ENCODE measurements at regions of chr16 and their contacts with region 1.

Region 1: GRCh38 chr16:56931892-56932720 is at the start of gene HERPUD1:
- DNase-seq: peak; percentile 100
- H3K4me3 ChIP-seq: peak within 1 kb of the TSS; percentile 72 to 96 (median 82)
- H3K27ac ChIP-seq: peak within 1 kb of the TSS; percentile 96 to 100 (median 99)
- H3K4me1 ChIP-seq: peaks cover 28 to 67% (median 54%) of the 10 kb centered on the region in 6 donors
- H3K27me3 ChIP-seq: no peaks in the 10 kb centered on the region
- CTCF ChIP-seq: peak in 9 of 11 experiments; percentile 6 to 57 (median 33)
- POLR2A ChIP-seq: peak; percentile 71 to 86 (median 74)
- total RNA-seq, gene HERPUD1: 162 to 370 (median 205) TPM

Region 2: DNA sequence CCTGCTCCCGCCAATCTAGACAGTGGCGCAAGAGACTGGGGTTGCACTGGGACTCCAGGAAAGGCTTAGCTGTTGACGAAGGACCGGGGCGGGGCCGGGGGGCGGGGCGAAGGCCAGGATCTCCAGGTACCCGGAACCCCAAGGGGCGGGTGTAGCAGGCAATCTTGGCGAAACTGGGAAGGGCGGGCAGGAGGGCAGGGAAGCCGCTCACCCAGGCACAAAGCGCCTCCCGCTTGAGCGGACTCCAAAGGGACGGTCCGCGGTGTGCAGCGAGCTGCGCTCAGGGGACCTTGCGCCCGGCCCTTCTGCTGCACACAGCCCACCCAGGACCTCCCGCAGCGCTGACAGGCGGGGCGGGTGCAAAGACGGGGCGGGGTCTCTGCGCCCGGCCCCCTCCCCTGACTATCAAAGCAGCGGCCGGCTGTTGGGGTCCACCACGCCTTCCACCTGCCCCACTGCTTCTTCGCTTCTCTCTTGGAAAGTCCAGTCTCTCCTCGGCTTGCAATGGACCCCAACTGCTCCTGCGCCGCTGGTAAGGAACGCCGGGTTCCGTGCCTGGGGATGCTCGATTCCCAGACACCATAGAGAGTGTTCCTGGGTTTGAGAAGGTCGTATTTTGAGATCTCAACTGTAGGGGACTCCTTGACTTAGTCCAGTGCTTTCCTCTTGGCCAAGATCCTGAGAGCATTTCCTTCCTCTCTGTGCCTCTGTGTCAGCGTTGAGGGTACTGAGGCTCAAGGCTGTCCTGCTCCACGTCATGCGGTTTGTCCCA is 274.4 kb before region 1 on chr16 and contains the start of gene MT1F:
- intact Hi-C with region 1: no loop called
- DNase-seq: peak; percentile 91
- H3K4me3 ChIP-seq: peak within 1 kb of the TSS; percentile 49 to 81 (median 66)
- H3K27ac ChIP-seq: peak within 1 kb of the TSS in 7 of 8 donors; percentile 61 to 86 (median 79)
- H3K4me1 ChIP-seq: peaks cover 0 to 28% (median 19%) of the 10 kb centered on the region in 6 donors
- H3K27me3 ChIP-seq: peaks cover 0 to 31% (median 1%) of the 10 kb centered on the region in 7 donors
- CTCF ChIP-seq: no peak
- POLR2A ChIP-seq: no peak
- total RNA-seq, gene MT1F: 6.4 to 21.0 (median 13.6) TPM

Region 3: DNA sequence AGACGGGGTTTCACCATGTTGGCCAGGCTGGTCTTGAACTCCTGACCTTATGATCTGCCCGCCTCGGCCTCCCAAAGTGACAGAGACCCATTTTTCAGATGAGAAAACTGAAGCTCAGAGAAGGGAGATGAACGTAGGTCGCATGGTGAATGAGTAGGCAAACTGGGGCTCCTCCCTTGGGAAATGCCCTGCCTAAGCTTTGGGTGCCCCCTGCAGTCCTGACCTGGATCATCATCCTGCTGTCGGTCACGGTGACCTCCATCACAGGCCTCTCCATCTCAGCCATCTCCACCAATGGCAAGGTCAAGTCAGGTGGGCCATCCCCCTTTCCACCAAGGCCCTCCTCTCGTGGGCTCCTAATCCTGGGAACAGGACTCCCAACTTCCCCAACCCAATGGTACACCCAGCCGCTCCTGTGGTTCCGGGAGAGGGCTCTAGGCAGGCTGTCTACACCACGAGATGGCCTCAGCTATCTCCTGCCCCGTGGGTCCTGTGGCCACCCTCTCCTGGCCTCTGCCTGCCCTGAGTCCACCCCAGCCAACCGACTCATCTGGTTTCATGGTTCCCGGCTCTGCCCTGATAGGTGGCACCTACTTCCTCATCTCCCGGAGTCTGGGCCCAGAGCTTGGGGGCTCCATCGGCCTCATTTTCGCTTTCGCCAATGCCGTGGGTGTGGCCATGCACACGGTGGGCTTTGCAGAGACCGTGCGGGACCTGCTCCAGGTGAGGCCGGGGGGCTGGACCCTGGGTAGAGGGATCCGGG is 62.4 kb before region 1 on chr16:
- intact Hi-C with region 1: loop called (anchors 5 kb)
- DNase-seq: no peak
- H3K4me3 ChIP-seq: peak overlapping the region in 1 of 8 donors; percentile 39
- H3K27ac ChIP-seq: peak overlapping the region in 3 of 8 donors; percentile 26 to 64 (median 51)
- H3K4me1 ChIP-seq: peaks cover 6 to 52% (median 27%) of the 10 kb centered on the region in 6 donors
- H3K27me3 ChIP-seq: no peaks in the 10 kb centered on the region
- CTCF ChIP-seq: peak in 6 of 11 experiments; percentile 2 to 32 (median 18)
- POLR2A ChIP-seq: no peak

Measured in spleen (tissue), 13 donors.